Prostate gland (tissue), 2 donors: ENCODE measurements at regions of chr3 and their contacts with region 1.

Region 1: GRCh38 chr3:197749601-197750395 is at the start of gene FYTTD1:
- DNase-seq: peak; percentile 84
- H3K4me3 ChIP-seq: peak within 1 kb of the TSS; percentile 65 to 81
- H3K27ac ChIP-seq: peak within 1 kb of the TSS; percentile 92
- H3K4me1 ChIP-seq: peaks cover 7% of the 10 kb centered on the region
- H3K27me3 ChIP-seq: no peaks in the 10 kb centered on the region
- CTCF ChIP-seq: peak; percentile 14 to 64 (median 44)
- POLR2A ChIP-seq: peak; percentile 65
- total RNA-seq, gene FYTTD1: 27.7 to 69.5 TPM

Region 2: GRCh38 chr3:197711973-197712707 is 37.7 kb before region 1 on chr3:
- intact Hi-C with region 1: loop called (anchors 5 kb)
- DNase-seq: peak; percentile 71
- H3K4me3 ChIP-seq: peak overlapping the region in 1 of 2 donors; percentile 14
- H3K27ac ChIP-seq: peak overlapping the region; percentile 74 to 75
- H3K4me1 ChIP-seq: no peaks in the 10 kb centered on the region
- H3K27me3 ChIP-seq: no peaks in the 10 kb centered on the region
- CTCF ChIP-seq: no peak
- POLR2A ChIP-seq: peak; percentile 64